Endothelial cell of umbilical vein (primary cell): ENCODE measurements at regions of chr1 and their contacts with region 1.

Region 1: DNA sequence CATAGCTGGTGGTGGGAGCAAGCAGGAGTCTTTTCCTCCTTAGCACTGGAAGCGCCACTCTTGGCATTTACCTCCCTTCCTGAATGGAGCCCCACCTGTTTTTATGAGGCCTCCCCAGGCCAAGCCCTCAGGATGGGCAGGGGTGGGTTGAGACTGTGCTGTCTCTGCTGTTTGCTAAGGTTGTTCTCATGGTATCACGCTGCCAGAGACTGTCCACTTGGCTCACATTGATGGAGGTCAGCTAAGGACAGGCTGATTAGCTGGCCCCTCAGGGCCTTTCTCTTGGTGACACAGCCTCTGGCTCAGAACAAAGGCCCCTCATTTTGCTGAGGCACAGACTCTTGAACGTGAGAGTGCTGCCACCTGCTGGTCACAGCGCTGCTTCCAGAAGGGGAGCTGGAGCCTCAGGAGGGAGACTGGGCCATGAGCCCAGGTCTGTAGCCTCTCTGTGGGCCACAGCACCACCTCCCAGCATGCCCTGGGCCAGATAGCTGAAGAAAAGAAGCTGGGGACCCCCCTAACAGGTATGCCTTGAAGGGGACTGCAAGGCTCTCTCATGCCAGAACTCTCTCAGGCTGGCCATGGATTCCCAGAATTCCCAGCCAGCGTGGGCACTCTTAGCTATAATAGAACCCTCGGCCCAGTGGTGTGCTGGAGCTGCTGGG is 85.6 kb downstream of the CD58 start:
- DNase-seq: peak; percentile 81
- H3K4me3 ChIP-seq: no peak overlapping the region
- H3K27ac ChIP-seq: no peak overlapping the region
- H3K4me1 ChIP-seq: peaks cover 34% of the 10 kb centered on the region
- H3K27me3 ChIP-seq: no peaks in the 10 kb centered on the region
- CTCF ChIP-seq: peak; percentile 91 to 94
- POLR2A ChIP-seq: no peak

Region 2: GRCh38 chr1:116139592-116140134 is 345.5 kb before region 1 on chr1:
- CTCF ChIA-PET with region 1: interaction called, 427 read pairs
- POLR2A ChIA-PET with region 1: interaction called, 6 read pairs
- dilution Hi-C with region 1: no loop called
- intact Hi-C with region 1: loop called (anchors 1 kb)
- DNase-seq: no peak
- H3K4me3 ChIP-seq: no peak overlapping the region
- H3K27ac ChIP-seq: no peak overlapping the region
- H3K4me1 ChIP-seq: peaks cover 2% of the 10 kb centered on the region
- H3K27me3 ChIP-seq: peaks cover 0 to 10% of the 10 kb centered on the region in 2 experiments
- CTCF ChIP-seq: no peak
- POLR2A ChIP-seq: no peak

Region 3: GRCh38 chr1:116168277-116169097 is 316.7 kb before region 1 on chr1:
- CTCF ChIA-PET with region 1: interaction called, 18 read pairs
- POLR2A ChIA-PET with region 1: no interaction called
- dilution Hi-C with region 1: no loop called
- intact Hi-C with region 1: loop called (anchors 1 kb)
- DNase-seq: peak; percentile 53
- H3K4me3 ChIP-seq: peak overlapping the region in 2 of 3 experiments; percentile 13 to 49
- H3K27ac ChIP-seq: no peak overlapping the region
- H3K4me1 ChIP-seq: no peaks in the 10 kb centered on the region
- H3K27me3 ChIP-seq: peaks cover 5 to 14% of the 10 kb centered on the region in 2 experiments
- CTCF ChIP-seq: peak; percentile 94 to 95
- POLR2A ChIP-seq: no peak

Region 4: DNA sequence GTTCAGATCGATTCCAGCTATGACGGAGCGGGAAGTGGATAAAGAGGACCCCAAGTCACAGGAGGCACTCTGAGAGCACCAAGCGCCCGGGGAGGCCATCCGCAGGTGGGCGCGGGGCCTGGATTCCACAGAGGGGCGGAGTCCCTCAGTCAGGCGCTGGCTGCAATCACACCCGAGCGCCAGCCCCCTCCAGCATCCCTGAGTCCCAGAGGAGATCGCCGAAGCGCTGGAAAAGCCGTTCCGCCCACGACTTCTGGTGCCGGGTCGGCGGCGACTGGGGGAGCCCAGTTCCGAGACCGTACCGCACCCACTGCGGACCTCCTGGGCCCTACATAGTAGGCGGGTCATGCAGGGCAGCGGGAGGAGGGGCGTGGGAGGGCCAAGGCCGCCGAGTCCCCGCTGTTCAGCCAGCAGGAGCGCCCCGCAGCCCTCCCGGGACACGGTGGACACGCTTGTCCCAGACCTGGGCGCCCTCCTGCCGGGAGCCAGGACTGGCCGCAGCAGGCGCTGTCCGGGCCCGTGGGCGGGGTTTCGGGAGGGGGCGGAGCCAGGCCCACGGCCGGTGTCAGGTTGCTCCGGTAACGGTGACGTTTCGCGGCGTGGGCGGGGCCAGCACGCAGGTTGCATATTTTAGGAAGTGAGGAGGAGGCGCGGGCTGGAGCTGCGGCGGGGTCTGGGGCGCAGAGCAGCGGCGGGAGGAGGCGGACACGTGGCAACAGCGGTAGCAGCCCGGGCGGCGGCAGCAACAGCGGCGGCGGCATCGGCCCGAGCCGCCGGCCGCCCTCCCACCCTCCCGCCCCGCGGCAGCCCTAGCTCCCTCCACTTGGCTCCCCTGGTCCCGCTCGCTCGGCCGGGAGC is 112.4 kb before region 1 on chr1 and contains the start of gene ATP1A1:
- CTCF ChIA-PET with region 1: interaction called, 37 read pairs
- POLR2A ChIA-PET with region 1: no interaction called
- dilution Hi-C with region 1: loop called (anchors 25 kb)
- intact Hi-C with region 1: loop called (anchors 1 kb)
- DNase-seq: peak; percentile 96
- H3K4me3 ChIP-seq: peak within 1 kb of the TSS; percentile 91 to 96 (median 94)
- H3K27ac ChIP-seq: peak within 1 kb of the TSS; percentile 96
- H3K4me1 ChIP-seq: peaks cover 37% of the 10 kb centered on the region
- H3K27me3 ChIP-seq: peaks cover 10 to 26% of the 10 kb centered on the region in 2 experiments
- CTCF ChIP-seq: peak in 1 of 2 donors; percentile 12
- POLR2A ChIP-seq: peak; percentile 93
- total RNA-seq, gene ATP1A1: 263 and 325 TPM in 2 replicates

Region 5: GRCh38 chr1:116397728-116398127 is 87.5 kb before region 1 on chr1:
- CTCF ChIA-PET with region 1: interaction called, 97 read pairs
- POLR2A ChIA-PET with region 1: no interaction called
- dilution Hi-C with region 1: loop called (anchors 25 kb)
- intact Hi-C with region 1: no loop called
- DNase-seq: no peak
- H3K4me3 ChIP-seq: no peak overlapping the region
- H3K27ac ChIP-seq: no peak overlapping the region
- H3K4me1 ChIP-seq: no peaks in the 10 kb centered on the region
- H3K27me3 ChIP-seq: no peaks in the 10 kb centered on the region
- CTCF ChIP-seq: no peak
- POLR2A ChIP-seq: no peak

Region 6: GRCh38 chr1:116435806-116436610 is 49.2 kb before region 1 on chr1:
- CTCF ChIA-PET with region 1: interaction called, 14 read pairs
- POLR2A ChIA-PET with region 1: no interaction called
- dilution Hi-C with region 1: no loop called
- intact Hi-C with region 1: loop called (anchors 1 kb)
- DNase-seq: no peak
- H3K4me3 ChIP-seq: no peak overlapping the region
- H3K27ac ChIP-seq: no peak overlapping the region
- H3K4me1 ChIP-seq: peaks cover 24% of the 10 kb centered on the region
- H3K27me3 ChIP-seq: no peaks in the 10 kb centered on the region
- CTCF ChIP-seq: no peak
- POLR2A ChIP-seq: no peak

Region 7: GRCh38 chr1:116498789-116499628 is 13.8 kb after region 1 on chr1:
- CTCF ChIA-PET with region 1: interaction called, 161 read pairs
- POLR2A ChIA-PET with region 1: interaction called, 5 read pairs
- dilution Hi-C with region 1: no loop called
- intact Hi-C with region 1: loop called (anchors 1 kb)
- DNase-seq: peak; percentile 77
- H3K4me3 ChIP-seq: no peak overlapping the region
- H3K27ac ChIP-seq: no peak overlapping the region
- H3K4me1 ChIP-seq: peaks cover 5% of the 10 kb centered on the region
- H3K27me3 ChIP-seq: no peaks in the 10 kb centered on the region
- CTCF ChIP-seq: peak; percentile 70 to 84
- POLR2A ChIP-seq: no peak